ENCODE measurements at regions of chr1 and their contacts with region 1.

Region 1: DNA sequence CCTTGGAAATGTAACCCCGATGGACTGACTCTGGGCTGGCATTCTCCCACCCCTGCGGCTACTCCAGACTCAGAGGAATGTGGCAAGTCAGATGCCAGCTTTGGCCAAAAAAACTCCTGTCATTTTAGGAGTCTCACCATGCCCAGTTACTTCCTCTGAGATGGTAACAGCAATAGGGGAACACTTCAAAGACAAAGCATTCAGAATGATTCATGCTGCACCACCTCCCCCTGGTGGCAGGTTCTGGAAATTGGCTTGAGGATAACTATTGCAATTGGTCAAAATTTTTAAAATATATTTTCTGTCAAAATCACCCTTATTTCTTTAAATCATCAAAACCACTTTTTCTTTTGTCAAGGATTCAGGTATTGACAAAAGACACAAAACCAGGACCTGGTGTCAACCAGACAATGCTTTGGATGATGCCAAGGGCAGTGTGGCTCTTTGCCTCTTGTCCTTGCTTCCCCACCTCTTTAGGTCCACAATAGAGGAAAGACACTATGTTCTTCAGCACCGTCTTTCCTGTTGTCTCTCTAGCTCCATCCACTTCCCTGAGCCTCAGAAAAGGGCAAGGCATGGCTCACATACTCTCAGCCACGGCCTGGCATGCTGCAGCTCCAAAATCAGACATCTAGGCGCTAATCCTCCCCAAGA is 9.9 kb upstream of the CDCA8 start:
- DNase-seq: no peak
- ATAC-seq: peak; percentile 46

Region 2: DNA sequence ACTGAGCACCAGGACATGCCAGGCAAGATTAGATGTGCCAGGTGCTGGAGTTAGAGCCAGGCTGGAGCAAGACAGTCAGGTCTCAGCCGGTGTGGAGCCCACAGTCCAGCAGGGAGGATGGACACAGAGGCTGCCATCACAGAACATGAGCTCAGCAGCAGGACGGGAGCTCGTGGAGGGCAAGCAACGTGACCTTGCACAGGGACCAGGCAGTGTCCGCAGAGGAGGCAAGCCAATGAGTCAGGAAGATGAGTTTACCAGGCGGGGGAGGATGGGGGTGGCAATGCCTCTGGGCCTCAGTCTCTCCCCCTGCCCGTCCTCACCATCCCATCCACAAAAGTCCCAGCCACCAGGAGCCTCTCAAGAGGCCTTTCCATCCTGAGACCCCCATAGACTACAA is 228.8 kb before region 1 on chr1:
- intact Hi-C with region 1: loop called (anchors 1 kb)
- DNase-seq: no peak
- ATAC-seq: no peak

Region 3: GRCh38 chr1:37602750-37603694 is 79.4 kb before region 1 on chr1:
- intact Hi-C with region 1: loop called (anchors 5 kb)
- DNase-seq: no peak
- ATAC-seq: peak; percentile 39